ENCODE measurements at regions of chr6 and their contacts with region 1.

Region 1: DNA sequence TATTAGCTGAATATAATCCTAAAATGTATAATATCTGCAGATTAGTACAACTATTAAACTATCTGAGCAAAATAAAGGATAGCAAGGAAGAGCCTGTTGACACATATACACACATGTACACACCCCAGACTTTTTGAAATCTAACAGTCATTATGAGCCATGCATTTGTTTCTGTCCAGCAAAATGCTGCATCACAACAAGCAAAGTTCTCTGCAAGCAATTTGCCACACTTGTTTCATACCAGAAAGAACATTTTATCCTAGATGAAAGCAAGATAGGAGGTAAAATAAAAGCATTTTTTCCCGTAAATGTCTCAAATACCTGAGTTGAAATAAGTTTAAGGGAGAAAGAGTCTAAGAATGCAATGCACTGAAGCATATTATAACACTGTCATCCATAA is 145.2 kb downstream of the COL21A1 start:
- DNase-seq: no peak
- H3K4me3 ChIP-seq: no peak overlapping the region
- H3K27ac ChIP-seq: no peak overlapping the region
- H3K27me3 ChIP-seq: no peaks in the 10 kb centered on the region
- CTCF ChIP-seq: no peak

Region 2: GRCh38 chr6:54315656-54316055 is 1786.6 kb before region 1 on chr6:
- CTCF ChIA-PET with region 1: no interaction called
- POLR2A ChIA-PET with region 1: no interaction called
- DNase-seq: no peak
- H3K4me3 ChIP-seq: no peak overlapping the region
- H3K27ac ChIP-seq: no peak overlapping the region
- H3K27me3 ChIP-seq: no peaks in the 10 kb centered on the region
- CTCF ChIP-seq: no peak

Region 3: GRCh38 chr6:56040223-56040622 is 62.0 kb before region 1 on chr6:
- CTCF ChIA-PET with region 1: interaction called, 12 read pairs
- POLR2A ChIA-PET with region 1: no interaction called
- DNase-seq: no peak
- H3K4me3 ChIP-seq: no peak overlapping the region
- H3K27ac ChIP-seq: no peak overlapping the region
- H3K27me3 ChIP-seq: no peaks in the 10 kb centered on the region
- CTCF ChIP-seq: no peak

Measured in AG04450 (cell line).